ENCODE measurements at regions of chr15 and their contacts with region 1.

Region 1: DNA sequence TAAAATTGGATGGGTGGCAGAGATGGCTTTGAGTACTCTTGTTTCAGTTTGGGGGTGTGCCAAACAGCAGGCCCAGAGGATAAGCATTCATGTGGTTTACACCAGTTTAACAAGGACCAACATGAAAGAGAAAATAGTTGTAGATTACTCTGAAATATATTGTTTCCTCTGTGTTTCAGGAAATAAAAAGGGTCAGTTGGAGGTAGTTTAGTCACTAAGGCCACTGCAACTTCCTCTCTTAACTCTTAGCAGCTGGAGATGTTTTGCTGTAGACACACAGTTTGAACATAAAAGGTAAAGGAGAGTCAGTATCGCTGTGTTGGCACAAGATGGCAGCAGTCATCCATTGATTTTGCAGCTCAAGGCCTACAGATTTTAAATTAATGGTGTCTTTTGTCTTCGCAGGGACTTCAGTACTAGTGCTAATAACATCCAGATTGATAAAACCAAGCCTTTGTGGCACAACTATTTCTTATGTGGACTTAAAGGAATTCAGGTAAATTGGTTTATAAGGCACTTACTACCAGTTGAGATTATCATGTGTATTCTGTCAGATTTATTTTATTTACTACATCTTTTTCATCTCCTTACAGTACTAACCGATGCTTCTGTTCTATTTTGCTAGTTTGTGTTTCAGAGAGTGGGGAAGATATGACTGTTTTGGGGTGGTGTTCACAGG is 65.5 kb downstream of the GALK2 start:
- DNase-seq: peak in 4 of 5 donors; percentile 32 to 40 (median 36)
- ATAC-seq: peak in 3 of 4 donors; percentile 81 to 85 (median 82)
- H3K4me3 ChIP-seq: no peak overlapping the region
- H3K27ac ChIP-seq: peak overlapping the region in 4 of 12 donors; percentile 4 to 29 (median 18)
- H3K4me1 ChIP-seq: peaks cover 0 to 33% (median 11%) of the 10 kb centered on the region in 12 donors
- H3K27me3 ChIP-seq: no peaks in the 10 kb centered on the region
- CTCF ChIP-seq: peak; percentile 56 to 84 (median 76)
- POLR2A ChIP-seq: no peak

Region 2: GRCh38 chr15:49415638-49416037 is 180.1 kb after region 1 on chr15:
- intact Hi-C with region 1: loop called in 8 of 10 experiments (anchors 2 to 5 kb)
- DNase-seq: no peak
- ATAC-seq: no peak
- H3K4me3 ChIP-seq: no peak overlapping the region
- H3K27ac ChIP-seq: no peak overlapping the region
- H3K4me1 ChIP-seq: no peaks in the 10 kb centered on the region
- H3K27me3 ChIP-seq: no peaks in the 10 kb centered on the region
- CTCF ChIP-seq: no peak
- POLR2A ChIP-seq: no peak

Region 3: GRCh38 chr15:49620658-49621368 is 385.2 kb after region 1 on chr15 and contains the starts of genes DTWD1 and FAM227B:
- intact Hi-C with region 1: loop called in 1 of 10 experiments (anchors 5 kb)
- DNase-seq: peak; percentile 97 to 99 (median 98)
- ATAC-seq: peak; percentile 99 to 100 (median 100)
- H3K4me3 ChIP-seq: peak within 1 kb of the TSS; percentile 59 to 87 (median 74)
- H3K27ac ChIP-seq: peak within 1 kb of the TSS; percentile 78 to 97 (median 93)
- H3K4me1 ChIP-seq: peaks cover 0 to 40% (median 19%) of the 10 kb centered on the region in 12 donors
- H3K27me3 ChIP-seq: no peaks in the 10 kb centered on the region
- CTCF ChIP-seq: peak in 4 of 12 donors; percentile 14 to 25 (median 14)
- POLR2A ChIP-seq: peak in 1 of 2 donors; percentile 84
- total RNA-seq, gene DTWD1: 6.3 to 28.0 (median 18.4) TPM
- total RNA-seq, gene FAM227B: 6.1 to 18.8 (median 14.4) TPM

Region 4: GRCh38 chr15:50051803-50052419 is 816.3 kb after region 1 on chr15:
- intact Hi-C with region 1: loop called in 5 of 10 experiments (anchors 5 to 10 kb)
- DNase-seq: peak in 4 of 5 donors; percentile 31 to 47 (median 38)
- ATAC-seq: peak in 3 of 4 donors; percentile 43 to 66 (median 49)
- H3K4me3 ChIP-seq: no peak overlapping the region
- H3K27ac ChIP-seq: peak overlapping the region in 1 of 12 donors; percentile 24
- H3K4me1 ChIP-seq: peaks cover 0 to 48% (median 5%) of the 10 kb centered on the region in 12 donors
- H3K27me3 ChIP-seq: no peaks in the 10 kb centered on the region
- CTCF ChIP-seq: peak; percentile 37 to 75 (median 62)
- POLR2A ChIP-seq: no peak